GM12878 (cell line): ENCODE measurements at regions of chr2 and their contacts with region 1.

Region 1: GRCh38 chr2:43159797-43160196 is 66.6 kb downstream of the ZFP36L2 start:
- DNase-seq: no peak
- ATAC-seq: no peak
- H3K4me3 ChIP-seq: no peak overlapping the region
- H3K27ac ChIP-seq: no peak overlapping the region
- H3K4me1 ChIP-seq: peaks cover 23% of the 10 kb centered on the region
- H3K27me3 ChIP-seq: no peaks in the 10 kb centered on the region
- CTCF ChIP-seq: no peak
- EP300 ChIP-seq: no peak
- POLR2A ChIP-seq: no peak
- RAD21 ChIP-seq: no peak

Region 2: GRCh38 chr2:43169987-43170386 is 10.2 kb after region 1 on chr2:
- CTCF ChIA-PET with region 1: interaction called, 13 read pairs
- POLR2A ChIA-PET with region 1: interaction called, 7 read pairs
- RAD21 ChIA-PET with region 1: interaction called, 9 read pairs
- SMC1A ChIA-PET with region 1: interaction called, 14 read pairs
- in situ Hi-C with region 1: no loop called
- intact Hi-C with region 1: no loop called
- DNase-seq: no peak
- ATAC-seq: peak; percentile 47
- H3K4me3 ChIP-seq: no peak overlapping the region
- H3K27ac ChIP-seq: no peak overlapping the region
- H3K4me1 ChIP-seq: peaks cover 35% of the 10 kb centered on the region
- H3K27me3 ChIP-seq: no peaks in the 10 kb centered on the region; a peak in 1 of 4 replicates
- CTCF ChIP-seq: peak; percentile 64 to 82 (median 81)
- EP300 ChIP-seq: no peak
- POLR2A ChIP-seq: no peak
- RAD21 ChIP-seq: peak; percentile 62

Region 3: GRCh38 chr2:43178602-43179542 is 19.1 kb after region 1 on chr2:
- CTCF ChIA-PET with region 1: no interaction called
- POLR2A ChIA-PET with region 1: interaction called, 3 read pairs
- RAD21 ChIA-PET with region 1: interaction called, 9 read pairs
- SMC1A ChIA-PET with region 1: interaction called, 14 read pairs
- in situ Hi-C with region 1: no loop called
- intact Hi-C with region 1: no loop called
- DNase-seq: no peak
- ATAC-seq: no peak
- H3K4me3 ChIP-seq: no peak overlapping the region
- H3K27ac ChIP-seq: no peak overlapping the region
- H3K4me1 ChIP-seq: peaks cover 13% of the 10 kb centered on the region
- H3K27me3 ChIP-seq: no peaks in the 10 kb centered on the region
- CTCF ChIP-seq: no peak
- EP300 ChIP-seq: no peak
- POLR2A ChIP-seq: no peak
- RAD21 ChIP-seq: no peak